ENCODE measurements at regions of chr20 and their contacts with region 1.

Region 1: DNA sequence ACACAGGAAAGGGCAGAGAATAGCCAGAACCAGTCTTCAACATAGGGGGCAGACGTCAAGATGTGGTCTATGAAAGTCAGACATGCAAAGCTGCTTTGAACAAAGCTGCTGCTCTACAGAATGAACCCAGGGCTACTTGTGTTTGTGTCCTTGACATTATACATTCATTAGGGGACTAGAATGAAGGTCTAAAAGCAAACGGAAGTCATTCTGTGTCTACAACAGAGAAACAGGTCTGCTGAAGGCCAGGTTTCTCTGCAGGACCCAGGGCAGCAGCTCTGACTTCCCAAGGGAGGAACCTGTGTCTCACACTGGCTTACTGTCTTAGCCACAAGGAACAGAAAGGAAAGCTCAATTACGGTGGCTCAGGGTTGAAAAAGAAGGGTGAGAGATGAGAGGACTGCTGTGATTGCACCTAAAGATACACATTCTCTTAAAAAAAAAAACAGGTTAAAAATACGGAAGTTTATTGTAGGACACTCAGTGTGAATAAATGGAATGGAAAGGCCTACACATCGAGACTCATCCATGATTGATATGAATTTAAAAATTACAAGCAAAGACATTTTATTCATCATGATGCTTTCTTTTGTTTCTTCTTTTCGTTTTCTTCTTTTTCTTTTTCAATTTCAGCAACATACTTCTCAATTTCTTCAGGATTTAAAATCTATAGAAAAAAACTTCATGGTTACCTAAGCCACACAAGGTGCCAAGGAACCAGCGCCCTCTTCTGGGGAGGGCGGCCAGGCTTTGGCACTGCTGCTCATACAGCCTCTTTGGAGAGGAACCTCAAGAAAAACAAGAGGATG is 6.7 kb downstream of the PSMA7 start:
- DNase-seq: peak; percentile 40
- ATAC-seq: peak; percentile 80
- H3K4me3 Mint-ChIP-seq: no peak overlapping the region
- H3K27ac Mint-ChIP-seq: no peak overlapping the region
- H3K4me1 Mint-ChIP-seq: peaks cover 37% of the 10 kb centered on the region
- H3K27me3 Mint-ChIP-seq: no peaks in the 10 kb centered on the region
- CTCF ChIP-seq: no peak

Region 2: GRCh38 chr20:61719691-61720347 is 416.7 kb before region 1 on chr20:
- CTCF ChIA-PET with region 1: no interaction called
- POLR2A ChIA-PET with region 1: no interaction called
- intact Hi-C with region 1: no loop called
- DNase-seq: no peak
- ATAC-seq: no peak
- H3K4me3 Mint-ChIP-seq: no peak overlapping the region
- H3K27ac Mint-ChIP-seq: no peak overlapping the region
- H3K4me1 Mint-ChIP-seq: no peaks in the 10 kb centered on the region
- H3K27me3 Mint-ChIP-seq: no peaks in the 10 kb centered on the region
- CTCF ChIP-seq: no peak

Region 3: DNA sequence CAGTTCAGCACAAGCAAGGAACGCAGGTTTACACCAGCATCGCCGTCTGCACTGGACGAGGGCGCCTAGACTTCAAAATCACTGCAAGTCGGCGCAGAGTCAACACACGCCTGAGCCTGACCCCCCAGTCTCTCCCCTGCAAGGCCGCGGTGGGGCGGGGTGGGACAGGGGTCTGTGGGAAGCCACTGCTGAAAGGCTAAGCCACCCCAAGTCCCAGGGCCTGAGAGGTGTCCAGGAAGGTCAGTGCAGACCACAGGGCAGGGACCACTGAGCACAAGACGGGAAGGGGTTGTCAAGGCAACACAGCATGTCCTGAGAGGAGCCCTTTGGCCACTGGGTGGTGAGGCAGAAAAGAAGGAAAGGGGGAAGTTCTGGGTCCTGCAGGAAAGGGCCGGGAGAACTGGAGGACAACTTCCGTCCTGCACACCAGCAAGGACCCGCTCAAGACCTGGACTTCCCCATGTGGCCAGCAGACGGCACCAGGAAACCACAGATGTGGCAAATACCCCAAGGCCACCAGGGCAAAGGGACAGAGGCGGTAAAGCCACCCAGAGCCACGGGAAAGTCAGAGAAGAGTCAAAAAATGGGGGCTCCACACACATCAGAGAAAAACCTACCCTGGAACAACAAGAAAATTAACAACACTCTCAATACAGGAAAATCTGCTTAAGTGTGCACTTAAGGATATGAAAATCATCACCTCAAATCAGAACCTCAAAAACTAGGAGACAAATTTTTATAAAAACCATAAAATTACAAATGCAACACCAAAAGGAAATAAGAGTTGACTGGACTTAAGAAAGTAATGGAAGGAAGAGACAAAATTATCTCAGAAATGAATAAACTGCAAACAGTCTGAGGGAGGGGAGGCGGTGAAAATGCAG is 155.5 kb before region 1 on chr20:
- CTCF ChIA-PET with region 1: interaction called, 4 read pairs
- POLR2A ChIA-PET with region 1: no interaction called
- intact Hi-C with region 1: loop called (anchors 1 kb)
- DNase-seq: peak; percentile 22
- ATAC-seq: peak; percentile 49
- H3K4me3 Mint-ChIP-seq: no peak overlapping the region
- H3K27ac Mint-ChIP-seq: no peak overlapping the region
- H3K4me1 Mint-ChIP-seq: peaks cover 12% of the 10 kb centered on the region
- H3K27me3 Mint-ChIP-seq: no peaks in the 10 kb centered on the region
- CTCF ChIP-seq: no peak

Region 4: GRCh38 chr20:62025832-62026563 is 110.5 kb before region 1 on chr20:
- CTCF ChIA-PET with region 1: interaction called, 4 read pairs
- POLR2A ChIA-PET with region 1: no interaction called
- intact Hi-C with region 1: loop called (anchors 5 kb)
- DNase-seq: no peak
- ATAC-seq: no peak
- H3K4me3 Mint-ChIP-seq: no peak overlapping the region
- H3K27ac Mint-ChIP-seq: no peak overlapping the region
- H3K4me1 Mint-ChIP-seq: peaks cover 39% of the 10 kb centered on the region
- H3K27me3 Mint-ChIP-seq: no peaks in the 10 kb centered on the region
- CTCF ChIP-seq: no peak

Region 5: GRCh38 chr20:62246872-62247665 is 110.6 kb after region 1 on chr20:
- CTCF ChIA-PET with region 1: no interaction called
- POLR2A ChIA-PET with region 1: no interaction called
- intact Hi-C with region 1: no loop called
- DNase-seq: no peak
- ATAC-seq: no peak
- H3K4me3 Mint-ChIP-seq: no peak overlapping the region
- H3K27ac Mint-ChIP-seq: no peak overlapping the region
- H3K4me1 Mint-ChIP-seq: peaks cover 38% of the 10 kb centered on the region
- H3K27me3 Mint-ChIP-seq: no peaks in the 10 kb centered on the region
- CTCF ChIP-seq: no peak

Region 6: DNA sequence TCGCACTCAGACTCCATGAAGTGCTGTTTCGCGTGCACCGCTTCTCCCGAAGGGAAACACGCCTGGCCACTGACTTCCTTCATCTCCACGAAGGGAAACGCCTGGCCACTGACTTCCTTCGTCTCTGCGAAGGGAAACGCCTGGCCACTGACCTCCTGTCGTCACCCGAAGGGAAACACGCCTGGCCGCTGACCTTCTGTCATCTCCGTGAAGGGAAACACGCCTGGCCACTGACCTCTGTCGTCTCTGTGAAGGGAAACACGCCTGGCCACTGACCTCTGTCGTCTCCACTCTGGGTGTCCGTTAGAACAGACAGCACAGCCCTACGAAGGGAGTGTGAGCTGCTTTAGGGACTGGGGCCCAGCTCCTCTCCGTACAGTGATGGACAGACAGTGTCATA is 149.2 kb after region 1 on chr20:
- CTCF ChIA-PET with region 1: no interaction called
- POLR2A ChIA-PET with region 1: no interaction called
- intact Hi-C with region 1: no loop called
- DNase-seq: no peak
- ATAC-seq: no peak
- H3K4me3 Mint-ChIP-seq: no peak overlapping the region
- H3K27ac Mint-ChIP-seq: no peak overlapping the region
- H3K4me1 Mint-ChIP-seq: no peaks in the 10 kb centered on the region
- H3K27me3 Mint-ChIP-seq: no peaks in the 10 kb centered on the region
- CTCF ChIP-seq: no peak